A673 (cell line): ENCODE measurements at regions of chr14 and their contacts with region 1.

Region 1: DNA sequence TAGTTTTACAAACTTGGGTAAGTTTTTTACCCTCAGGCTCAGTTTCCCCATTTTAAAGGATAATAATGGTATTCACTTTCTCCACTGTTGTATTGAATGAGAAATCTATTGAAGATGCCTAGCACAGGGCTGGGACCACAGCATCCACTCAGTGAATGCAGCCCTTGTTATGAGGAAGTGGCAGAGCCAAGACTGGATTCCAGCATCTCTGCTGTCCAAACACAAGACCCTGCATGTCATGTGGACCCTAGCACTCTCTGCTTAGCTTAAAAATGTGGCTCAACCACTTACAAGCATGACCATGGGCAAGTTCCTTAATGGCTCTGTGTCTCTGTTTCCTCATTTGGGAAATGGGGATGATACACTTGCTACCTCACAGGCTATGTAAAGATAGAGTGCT is 24.1 kb upstream of the TRIM9 start:
- DNase-seq: no peak
- H3K4me3 ChIP-seq: no peak overlapping the region
- H3K27ac ChIP-seq: no peak overlapping the region
- H3K4me1 ChIP-seq: no peaks in the 10 kb centered on the region
- H3K27me3 ChIP-seq: no peaks in the 10 kb centered on the region
- CTCF ChIP-seq: no peak

Region 2: GRCh38 chr14:51069055-51069664 is 49.8 kb before region 1 on chr14:
- CTCF ChIA-PET with region 1: no interaction called
- POLR2A ChIA-PET with region 1: no interaction called
- intact Hi-C with region 1: loop called (anchors 5 kb)
- DNase-seq: peak; percentile 25
- H3K4me3 ChIP-seq: no peak overlapping the region
- H3K27ac ChIP-seq: no peak overlapping the region
- H3K4me1 ChIP-seq: peaks cover 14% of the 10 kb centered on the region
- H3K27me3 ChIP-seq: no peaks in the 10 kb centered on the region
- CTCF ChIP-seq: no peak

Region 3: GRCh38 chr14:51707327-51707726 is 588.3 kb after region 1 on chr14:
- CTCF ChIA-PET with region 1: no interaction called
- POLR2A ChIA-PET with region 1: no interaction called
- intact Hi-C with region 1: loop called (anchors 5 kb)
- DNase-seq: no peak
- H3K4me3 ChIP-seq: no peak overlapping the region
- H3K27ac ChIP-seq: no peak overlapping the region
- H3K4me1 ChIP-seq: no peaks in the 10 kb centered on the region
- H3K27me3 ChIP-seq: no peaks in the 10 kb centered on the region
- CTCF ChIP-seq: no peak